Activated naive CD4-positive, alpha-beta T cell treated with anti-CD3 and anti-CD28 coated beads for 36 hours (primary cell): ENCODE measurements at regions of chr3 and their contacts with region 1.

Region 1: DNA sequence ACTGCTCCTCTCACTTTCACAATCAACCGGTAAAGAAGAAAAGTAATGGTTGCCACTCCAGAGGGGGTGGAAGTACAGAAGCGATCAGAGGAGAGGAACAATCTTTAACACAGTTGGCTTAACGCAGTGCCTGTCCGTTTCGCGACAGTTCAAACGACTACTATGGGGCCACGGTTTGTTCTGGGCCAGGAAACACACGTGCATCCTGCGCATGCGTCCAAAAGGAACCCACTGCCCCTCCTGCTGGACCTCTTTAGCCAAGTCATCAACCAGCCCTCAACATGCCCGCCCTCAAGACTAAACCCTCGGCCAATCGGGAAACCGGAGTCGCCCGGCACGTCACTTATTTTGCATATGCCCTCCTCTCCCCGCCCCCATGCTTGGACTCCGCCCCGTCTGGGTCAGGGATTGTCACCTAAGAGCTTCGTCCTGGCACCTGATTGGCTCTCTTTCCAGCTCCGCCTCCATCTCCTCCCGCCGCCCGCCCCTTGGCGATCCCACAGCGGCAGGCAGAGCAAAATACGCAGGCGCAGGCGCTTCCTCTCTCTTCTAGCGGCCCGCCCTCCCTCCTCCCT is 345 bp upstream of the CDV3 start:
- DNase-seq: peak; percentile 100
- H3K4me3 Mint-ChIP-seq: peak overlapping the region; percentile 87
- H3K27ac Mint-ChIP-seq: peak overlapping the region; percentile 100
- H3K4me1 Mint-ChIP-seq: peaks cover 43% of the 10 kb centered on the region
- H3K27me3 Mint-ChIP-seq: no peaks in the 10 kb centered on the region

Region 2: DNA sequence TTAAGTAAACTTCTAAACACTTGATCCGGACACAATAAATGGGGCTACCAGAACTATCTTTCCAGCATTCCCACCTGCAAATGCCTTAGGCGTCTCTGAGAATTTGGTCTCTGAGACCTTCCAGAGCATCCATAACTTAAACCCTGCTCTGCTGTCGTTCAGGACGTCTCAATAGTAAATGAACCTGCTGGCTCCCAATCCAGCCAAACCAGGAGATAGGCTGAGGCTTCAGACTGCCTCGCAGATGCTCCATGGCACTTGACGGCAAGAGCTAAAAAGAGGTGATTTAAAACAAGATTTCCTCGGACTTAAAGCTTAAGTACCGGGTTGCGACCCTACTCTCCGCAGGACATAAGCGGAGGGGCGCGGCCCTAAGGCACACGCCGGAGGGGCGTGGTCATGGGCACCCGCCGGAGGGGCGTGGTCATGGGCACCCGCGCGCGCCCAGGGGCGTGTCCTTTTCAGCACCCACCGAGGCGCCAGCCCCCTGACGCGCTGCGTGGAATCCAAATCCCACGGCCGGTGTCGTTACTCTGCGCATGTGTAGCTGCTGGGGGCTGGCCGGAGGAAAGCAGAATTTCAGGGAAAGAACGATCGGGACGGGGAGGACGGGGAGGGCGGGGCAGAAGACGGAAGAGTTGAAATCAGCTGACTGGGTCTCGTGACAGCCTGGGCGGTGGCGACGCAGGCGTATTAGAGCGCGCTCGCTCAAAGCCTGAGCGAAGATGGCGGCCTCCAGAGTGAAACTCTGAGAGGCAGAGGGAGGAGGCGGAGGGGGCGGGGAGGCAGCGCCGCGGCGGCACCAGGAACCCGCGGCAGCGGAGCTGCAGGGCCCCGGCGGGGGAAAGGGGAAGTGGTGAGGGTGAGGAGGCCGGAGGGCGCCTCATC is 1156.1 kb before region 1 on chr3 and contains the start of gene DNAJC13:
- CTCF ChIA-PET with region 1: no interaction called
- intact Hi-C with region 1: loop called (anchors 1 kb)
- DNase-seq: peak; percentile 92
- H3K4me3 Mint-ChIP-seq: peak within 1 kb of the TSS; percentile 91
- H3K27ac Mint-ChIP-seq: peak within 1 kb of the TSS; percentile 90
- H3K4me1 Mint-ChIP-seq: peaks cover 22% of the 10 kb centered on the region
- H3K27me3 Mint-ChIP-seq: no peaks in the 10 kb centered on the region
- total RNA-seq, gene DNAJC13: 32.8 to 33.6 TPM

Region 3: GRCh38 chr3:133448478-133449122 is 124.5 kb before region 1 on chr3:
- CTCF ChIA-PET with region 1: interaction called, 6 read pairs
- intact Hi-C with region 1: loop called (anchors 1 kb)
- DNase-seq: peak; percentile 76
- H3K4me3 Mint-ChIP-seq: no peak overlapping the region
- H3K27ac Mint-ChIP-seq: peak overlapping the region; percentile 42
- H3K4me1 Mint-ChIP-seq: peaks cover 36% of the 10 kb centered on the region
- H3K27me3 Mint-ChIP-seq: no peaks in the 10 kb centered on the region

Region 4: GRCh38 chr3:133506215-133506901 is 66.8 kb before region 1 on chr3:
- CTCF ChIA-PET with region 1: interaction called, 3 read pairs
- intact Hi-C with region 1: loop called (anchors 1 kb)
- DNase-seq: peak; percentile 59
- H3K4me3 Mint-ChIP-seq: peak overlapping the region; percentile 54
- H3K27ac Mint-ChIP-seq: peak overlapping the region; percentile 67
- H3K4me1 Mint-ChIP-seq: peaks cover 11% of the 10 kb centered on the region
- H3K27me3 Mint-ChIP-seq: no peaks in the 10 kb centered on the region

Region 5: GRCh38 chr3:133805527-133806475 is 232.7 kb after region 1 on chr3 and contains the start of gene SRPRB:
- CTCF ChIA-PET with region 1: no interaction called
- intact Hi-C with region 1: loop called (anchors 1 kb)
- DNase-seq: peak; percentile 98
- H3K4me3 Mint-ChIP-seq: peak within 1 kb of the TSS; percentile 93
- H3K27ac Mint-ChIP-seq: peak within 1 kb of the TSS; percentile 94
- H3K4me1 Mint-ChIP-seq: peaks cover 37% of the 10 kb centered on the region
- H3K27me3 Mint-ChIP-seq: no peaks in the 10 kb centered on the region
- total RNA-seq, gene SRPRB: 55.0 to 56.8 TPM

Region 6: DNA sequence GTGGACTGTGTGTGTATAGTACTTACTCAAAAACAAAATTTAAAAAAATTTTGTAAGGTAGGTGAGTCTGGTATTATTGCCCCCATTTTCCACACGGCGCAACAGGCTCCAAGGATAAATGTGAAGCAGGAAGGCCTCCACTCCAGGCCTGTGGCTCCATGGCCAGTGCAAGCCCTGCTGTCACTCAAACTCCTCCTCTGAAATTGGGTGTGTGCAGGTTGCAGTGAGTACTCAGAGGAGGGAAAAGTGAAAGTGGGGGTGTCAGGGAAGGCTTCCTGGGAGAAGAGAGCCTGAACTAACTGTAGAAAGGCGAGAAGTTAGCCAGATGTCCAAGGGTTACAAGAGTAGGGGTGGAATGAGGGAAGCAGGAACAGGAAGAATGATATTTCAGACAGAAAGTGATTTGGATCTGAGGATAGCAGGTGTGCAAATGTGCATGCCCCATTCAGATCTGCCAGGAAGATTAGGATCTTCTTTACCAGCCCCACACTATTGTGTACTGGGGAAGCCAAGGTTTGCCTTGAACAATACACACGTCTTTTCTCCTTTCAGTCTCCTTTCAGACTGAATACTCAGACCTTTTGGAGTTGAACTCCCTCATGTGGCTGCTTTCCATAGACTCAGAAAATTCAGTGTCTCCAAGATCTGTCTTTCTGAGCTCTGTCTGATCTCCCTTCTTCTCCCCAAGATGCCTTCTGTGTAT is 726.2 kb after region 1 on chr3:
- CTCF ChIA-PET with region 1: no interaction called
- intact Hi-C with region 1: loop called (anchors 2 kb)
- DNase-seq: no peak
- H3K4me3 Mint-ChIP-seq: no peak overlapping the region
- H3K27ac Mint-ChIP-seq: no peak overlapping the region
- H3K4me1 Mint-ChIP-seq: no peaks in the 10 kb centered on the region
- H3K27me3 Mint-ChIP-seq: peaks cover 11% of the 10 kb centered on the region